ENCODE measurements at regions of chr3 and their contacts with region 1.

Region 1: DNA sequence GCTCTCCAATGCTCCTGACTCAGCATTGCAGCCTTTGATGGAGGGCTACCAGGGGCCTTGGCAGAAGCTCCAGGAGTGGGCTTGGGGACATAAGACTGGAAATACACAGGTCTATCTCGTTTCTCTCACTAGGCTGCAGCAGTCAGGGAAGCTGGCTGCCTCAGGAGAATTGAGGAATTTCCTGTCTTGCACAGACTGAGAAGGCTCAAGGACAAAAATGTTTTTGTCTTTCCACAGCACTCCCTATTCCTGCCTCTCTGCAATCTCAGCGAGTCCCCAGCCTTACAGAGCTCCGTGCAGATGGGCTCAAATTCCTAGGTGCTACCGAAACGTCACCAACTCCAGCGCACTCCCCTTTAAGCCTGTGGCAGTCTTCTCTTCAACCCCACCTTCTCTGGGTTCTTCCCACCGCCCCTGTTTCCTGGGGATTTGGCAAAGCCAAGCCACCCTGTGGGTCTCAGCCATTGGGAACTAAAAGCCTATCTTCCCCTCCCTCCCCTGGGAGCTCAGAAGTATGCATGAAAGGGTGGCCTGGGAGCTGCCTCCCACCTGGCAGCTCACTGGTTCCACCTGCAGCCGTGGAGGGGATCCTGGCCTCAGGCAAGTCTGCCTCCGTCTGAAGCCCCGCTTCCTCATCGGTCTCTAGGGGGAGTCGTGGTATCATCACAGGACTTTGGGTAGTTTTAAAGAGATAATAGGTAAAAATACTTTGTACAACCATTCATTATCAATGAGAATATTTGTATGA is 322.6 kb upstream of the FRG2C start:
- DNase-seq: peak; percentile 15 to 62
- H3K4me3 ChIP-seq: peak overlapping the region in 1 of 4 experiments; percentile 38; a peak in 1 of 8 replicates
- H3K27ac ChIP-seq: no peak overlapping the region
- H3K4me1 ChIP-seq: no peaks in the 10 kb centered on the region; a peak in 1 of 7 replicates
- H3K27me3 ChIP-seq: no peaks in the 10 kb centered on the region
- CTCF ChIP-seq: peak; percentile 45 to 73 (median 62)
- EP300 ChIP-seq: no peak
- POLR2A ChIP-seq: no peak
- RAD21 ChIP-seq: peak; percentile 54 to 58

Region 2: GRCh38 chr3:75265897-75266296 is 75.6 kb before region 1 on chr3:
- CTCF ChIA-PET with region 1: no interaction called
- POLR2A ChIA-PET with region 1: no interaction called
- DNase-seq: no peak
- H3K4me3 ChIP-seq: no peak overlapping the region
- H3K27ac ChIP-seq: no peak overlapping the region
- H3K4me1 ChIP-seq: no peaks in the 10 kb centered on the region
- H3K27me3 ChIP-seq: no peaks in the 10 kb centered on the region
- CTCF ChIP-seq: no peak
- EP300 ChIP-seq: no peak
- POLR2A ChIP-seq: no peak
- RAD21 ChIP-seq: no peak

Region 3: DNA sequence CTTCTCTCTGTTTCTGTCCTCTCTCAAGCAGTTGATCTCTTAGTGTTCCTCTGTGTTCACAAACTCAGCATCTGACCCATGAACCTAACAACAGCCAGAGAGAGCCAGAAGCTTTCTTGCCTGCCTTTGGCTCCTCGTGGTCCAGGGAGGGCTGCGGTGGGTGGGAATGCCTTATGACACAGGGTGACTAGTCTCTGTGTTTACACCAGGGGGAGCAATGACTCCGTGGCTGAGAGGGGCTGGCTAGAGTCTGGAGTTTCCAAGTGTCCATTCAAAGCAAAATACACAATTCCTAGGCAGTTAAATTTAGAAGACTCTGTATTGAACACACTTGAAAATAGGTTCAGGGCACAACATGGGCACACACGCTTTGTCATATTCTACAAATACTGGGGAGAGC is 47.4 kb before region 1 on chr3:
- CTCF ChIA-PET with region 1: interaction called, 16 read pairs
- POLR2A ChIA-PET with region 1: no interaction called
- DNase-seq: peak; percentile 7 to 53
- H3K4me3 ChIP-seq: no peak overlapping the region
- H3K27ac ChIP-seq: no peak overlapping the region
- H3K4me1 ChIP-seq: no peaks in the 10 kb centered on the region
- H3K27me3 ChIP-seq: no peaks in the 10 kb centered on the region
- CTCF ChIP-seq: peak; percentile 60 to 89 (median 70)
- EP300 ChIP-seq: no peak
- POLR2A ChIP-seq: no peak
- RAD21 ChIP-seq: peak; percentile 86 to 89

Region 4: GRCh38 chr3:75325716-75326115 is 15.8 kb before region 1 on chr3:
- CTCF ChIA-PET with region 1: interaction called, 24 read pairs
- POLR2A ChIA-PET with region 1: interaction called, 4 read pairs
- DNase-seq: no peak
- H3K4me3 ChIP-seq: no peak overlapping the region
- H3K27ac ChIP-seq: no peak overlapping the region
- H3K4me1 ChIP-seq: no peaks in the 10 kb centered on the region; a peak in 1 of 7 replicates
- H3K27me3 ChIP-seq: no peaks in the 10 kb centered on the region
- CTCF ChIP-seq: no peak
- EP300 ChIP-seq: no peak
- POLR2A ChIP-seq: no peak
- RAD21 ChIP-seq: no peak